Activated CD4-positive, alpha-beta T cell treated with anti-CD3 and anti-CD28 coated beads, Interleukin-2, amount 10 ng/mL, durations not matched to agents 7 days and 5 days (primary cell): ENCODE measurements at regions of chr11 and their contacts with region 1.

Region 1: GRCh38 chr11:30653606-30654005 is 67.5 kb upstream of the MPPED2 start:
- DNase-seq: no peak
- H3K4me3 Mint-ChIP-seq: no peak overlapping the region
- H3K27ac Mint-ChIP-seq: no peak overlapping the region
- H3K4me1 Mint-ChIP-seq: no peaks in the 10 kb centered on the region
- H3K27me3 Mint-ChIP-seq: no peaks in the 10 kb centered on the region

Region 2: DNA sequence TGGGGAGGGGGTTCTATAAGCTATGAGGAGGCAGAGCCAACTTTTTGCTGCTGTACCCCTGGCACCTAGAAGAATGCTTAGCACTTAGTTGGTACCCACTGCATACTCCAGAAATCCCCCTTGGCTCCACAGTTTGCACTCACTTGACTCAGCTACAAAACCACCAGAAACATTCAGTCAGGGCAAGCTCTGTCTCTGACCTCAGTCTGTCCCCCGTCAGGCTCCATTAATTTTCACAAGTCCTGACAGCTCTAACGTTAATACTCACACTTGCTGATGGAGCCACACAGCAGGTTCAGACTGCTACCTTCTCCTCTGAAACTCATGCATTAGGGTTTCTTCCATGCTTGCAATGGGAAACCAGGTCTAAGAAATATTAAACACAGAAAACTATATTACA is 149.1 kb before region 1 on chr11:
- CTCF ChIA-PET with region 1: no interaction called
- POLR2A ChIA-PET with region 1: no interaction called
- DNase-seq: no peak
- H3K4me3 Mint-ChIP-seq: no peak overlapping the region
- H3K27ac Mint-ChIP-seq: no peak overlapping the region
- H3K4me1 Mint-ChIP-seq: no peaks in the 10 kb centered on the region
- H3K27me3 Mint-ChIP-seq: peaks cover 2% of the 10 kb centered on the region

Region 3: DNA sequence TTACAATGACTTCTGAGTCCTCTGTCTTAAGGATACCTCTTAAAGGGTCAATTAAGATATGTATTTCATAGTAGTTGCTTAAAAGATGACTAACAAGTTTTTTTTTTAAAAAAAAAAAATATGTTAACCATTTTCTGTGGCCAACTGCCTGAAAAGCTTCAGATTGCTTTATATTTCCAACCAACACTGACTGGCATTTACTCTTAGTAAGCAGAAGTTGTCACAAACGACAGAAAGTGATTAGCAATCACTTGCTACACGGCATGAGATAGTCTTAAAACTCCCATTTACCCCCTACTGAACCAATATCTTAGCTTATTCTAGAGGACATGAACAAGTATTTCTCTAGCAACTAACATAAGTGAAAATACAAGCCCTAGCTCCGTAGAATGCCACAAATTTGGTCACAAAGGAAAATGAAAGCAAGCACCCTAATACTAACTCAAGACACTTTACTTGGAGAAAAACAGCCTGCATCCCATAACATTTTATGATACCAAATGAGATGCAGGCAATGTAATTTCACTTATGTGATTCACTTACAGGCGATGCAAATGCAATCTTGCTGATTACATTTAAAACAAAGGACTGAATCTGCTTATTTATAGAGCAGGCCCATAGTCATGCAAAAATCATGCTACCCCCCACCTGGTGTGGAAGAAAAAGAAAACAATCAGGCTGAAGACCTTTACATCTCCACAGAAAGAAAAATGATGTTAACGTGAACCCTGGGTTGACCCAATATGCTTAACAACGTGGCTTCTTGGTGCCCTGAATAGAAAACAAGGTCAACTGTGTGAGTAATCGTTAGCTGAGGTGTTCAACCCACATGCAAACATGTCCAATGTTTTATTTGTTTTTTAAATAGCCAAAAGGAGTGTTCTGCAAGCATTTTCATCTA is 93.2 kb before region 1 on chr11:
- CTCF ChIA-PET with region 1: no interaction called
- POLR2A ChIA-PET with region 1: no interaction called
- DNase-seq: no peak
- H3K4me3 Mint-ChIP-seq: no peak overlapping the region
- H3K27ac Mint-ChIP-seq: no peak overlapping the region
- H3K4me1 Mint-ChIP-seq: no peaks in the 10 kb centered on the region
- H3K27me3 Mint-ChIP-seq: no peaks in the 10 kb centered on the region

Region 4: GRCh38 chr11:30617771-30618170 is 35.8 kb before region 1 on chr11:
- CTCF ChIA-PET with region 1: no interaction called
- POLR2A ChIA-PET with region 1: interaction called, 12 read pairs
- DNase-seq: no peak
- H3K4me3 Mint-ChIP-seq: no peak overlapping the region
- H3K27ac Mint-ChIP-seq: no peak overlapping the region
- H3K4me1 Mint-ChIP-seq: no peaks in the 10 kb centered on the region
- H3K27me3 Mint-ChIP-seq: no peaks in the 10 kb centered on the region